Aorta (tissue), 5 donors: ENCODE measurements at regions of chr5 and their contacts with region 1.

Region 1: GRCh38 chr5:120055858-120056257 is 408.2 kb upstream of the PRR16 start:
- DNase-seq: no peak
- ATAC-seq: peak; percentile 64
- H3K4me3 ChIP-seq: no peak overlapping the region
- H3K27ac ChIP-seq: peak overlapping the region in 1 of 2 donors; percentile 28
- H3K4me1 ChIP-seq: no peaks in the 10 kb centered on the region
- H3K27me3 ChIP-seq: no peaks in the 10 kb centered on the region

Region 2: GRCh38 chr5:120293796-120294195 is 237.9 kb after region 1 on chr5:
- intact Hi-C with region 1: loop called in 1 of 2 experiments (anchors 5 kb)
- DNase-seq: no peak
- ATAC-seq: no peak
- H3K4me3 ChIP-seq: no peak overlapping the region
- H3K27ac ChIP-seq: no peak overlapping the region
- H3K4me1 ChIP-seq: peaks cover 3 to 4% of the 10 kb centered on the region in 2 donors
- H3K27me3 ChIP-seq: no peaks in the 10 kb centered on the region